Endothelial cell of umbilical vein (primary cell): ENCODE measurements at regions of chr2 and their contacts with region 1.

Region 1: DNA sequence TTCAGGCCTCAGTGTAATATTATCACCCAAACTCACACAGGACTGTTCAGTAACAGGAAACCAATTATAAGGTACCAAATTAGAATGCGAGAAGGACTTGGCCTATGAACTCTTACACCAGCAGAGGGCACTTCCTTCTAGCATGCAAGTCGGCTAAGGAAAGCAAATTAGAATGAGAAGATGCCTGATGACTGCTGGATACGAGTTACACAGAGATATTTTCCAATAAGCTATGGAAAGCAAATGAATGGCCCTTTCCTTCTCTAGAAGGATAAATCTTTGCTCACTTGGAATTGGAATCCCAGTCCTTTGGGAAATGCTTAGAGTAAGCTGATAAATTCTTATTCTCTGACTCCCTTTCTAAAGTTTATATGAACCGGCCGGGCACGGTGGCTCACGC is 109.8 kb downstream of the AP1S3 start:
- DNase-seq: peak; percentile 60
- H3K4me3 ChIP-seq: no peak overlapping the region
- H3K27ac ChIP-seq: peak overlapping the region; percentile 14
- H3K4me1 ChIP-seq: peaks cover 30% of the 10 kb centered on the region
- H3K27me3 ChIP-seq: no peaks in the 10 kb centered on the region
- CTCF ChIP-seq: peak; percentile 38 to 48
- POLR2A ChIP-seq: no peak

Region 2: GRCh38 chr2:223549215-223549614 is 178.3 kb before region 1 on chr2:
- CTCF ChIA-PET with region 1: no interaction called
- POLR2A ChIA-PET with region 1: no interaction called
- dilution Hi-C with region 1: no loop called
- intact Hi-C with region 1: loop called (anchors 1 kb)
- DNase-seq: peak; percentile 88
- H3K4me3 ChIP-seq: no peak overlapping the region
- H3K27ac ChIP-seq: no peak overlapping the region
- H3K4me1 ChIP-seq: peaks cover 10% of the 10 kb centered on the region
- H3K27me3 ChIP-seq: peaks cover 0 to 22% of the 10 kb centered on the region in 2 experiments
- CTCF ChIP-seq: no peak
- POLR2A ChIP-seq: peak; percentile 47

Region 3: GRCh38 chr2:223613017-223613950 is 114.3 kb before region 1 on chr2:
- CTCF ChIA-PET with region 1: no interaction called
- POLR2A ChIA-PET with region 1: no interaction called
- dilution Hi-C with region 1: no loop called
- intact Hi-C with region 1: loop called (anchors 2 kb)
- DNase-seq: peak; percentile 94
- H3K4me3 ChIP-seq: peak overlapping the region in 1 of 3 experiments; percentile 41
- H3K27ac ChIP-seq: peak overlapping the region; percentile 30
- H3K4me1 ChIP-seq: peaks cover 10% of the 10 kb centered on the region
- H3K27me3 ChIP-seq: peaks cover under 1 to 2% of the 10 kb centered on the region in 2 experiments
- CTCF ChIP-seq: peak in 1 of 2 donors; percentile 8
- POLR2A ChIP-seq: no peak

Region 4: GRCh38 chr2:223692191-223692947 is 35.2 kb before region 1 on chr2:
- CTCF ChIA-PET with region 1: interaction called, 23 read pairs
- POLR2A ChIA-PET with region 1: no interaction called
- dilution Hi-C with region 1: no loop called
- intact Hi-C with region 1: loop called (anchors 1 kb)
- DNase-seq: peak; percentile 69
- H3K4me3 ChIP-seq: no peak overlapping the region
- H3K27ac ChIP-seq: no peak overlapping the region
- H3K4me1 ChIP-seq: peaks cover 13% of the 10 kb centered on the region
- H3K27me3 ChIP-seq: no peaks in the 10 kb centered on the region
- CTCF ChIP-seq: peak; percentile 64 to 82
- POLR2A ChIP-seq: no peak

Region 5: GRCh38 chr2:223815186-223815883 is 87.8 kb after region 1 on chr2:
- CTCF ChIA-PET with region 1: interaction called, 3 read pairs
- POLR2A ChIA-PET with region 1: no interaction called
- dilution Hi-C with region 1: no loop called
- intact Hi-C with region 1: loop called (anchors 1 kb)
- DNase-seq: peak; percentile 97
- H3K4me3 ChIP-seq: no peak overlapping the region
- H3K27ac ChIP-seq: peak overlapping the region; percentile 49
- H3K4me1 ChIP-seq: peaks cover 25% of the 10 kb centered on the region
- H3K27me3 ChIP-seq: no peaks in the 10 kb centered on the region
- CTCF ChIP-seq: no peak
- POLR2A ChIP-seq: no peak